Activated CD4-positive, alpha-beta T cell treated with anti-CD3 and anti-CD28 coated beads, Interleukin-2, amount 10 ng/mL, durations not matched to agents 7 days and 5 days (primary cell): ENCODE measurements at regions of chr11 and their contacts with region 1.

Region 1: GRCh38 chr11:113971506-113972195 is 3.3 kb upstream of the HTR3A start:
- DNase-seq: no peak
- H3K4me3 Mint-ChIP-seq: no peak overlapping the region
- H3K27ac Mint-ChIP-seq: no peak overlapping the region
- H3K4me1 Mint-ChIP-seq: no peaks in the 10 kb centered on the region
- H3K27me3 Mint-ChIP-seq: peaks cover 2% of the 10 kb centered on the region

Region 2: DNA sequence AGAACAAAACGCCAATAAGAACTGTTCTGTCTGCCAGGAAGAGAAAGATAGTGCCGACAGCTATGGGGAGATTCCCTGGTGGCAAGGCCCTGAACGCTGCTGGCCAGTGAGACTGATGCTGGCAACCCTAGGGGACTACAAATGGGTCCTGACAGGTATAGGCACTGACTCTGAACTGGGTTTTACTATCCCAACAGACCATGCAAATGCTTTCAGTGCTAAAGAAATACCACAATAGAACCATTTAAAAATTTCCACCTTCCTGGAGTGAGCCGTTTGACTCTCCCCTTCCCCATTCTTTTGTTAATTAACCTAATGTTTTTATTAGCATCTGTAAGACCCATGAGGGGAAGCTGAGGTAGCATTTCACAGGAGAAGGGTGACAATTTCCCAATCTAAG is 121.9 kb before region 1 on chr11:
- CTCF ChIA-PET with region 1: no interaction called
- POLR2A ChIA-PET with region 1: no interaction called
- DNase-seq: no peak
- H3K4me3 Mint-ChIP-seq: no peak overlapping the region
- H3K27ac Mint-ChIP-seq: no peak overlapping the region
- H3K4me1 Mint-ChIP-seq: no peaks in the 10 kb centered on the region
- H3K27me3 Mint-ChIP-seq: no peaks in the 10 kb centered on the region

Region 3: DNA sequence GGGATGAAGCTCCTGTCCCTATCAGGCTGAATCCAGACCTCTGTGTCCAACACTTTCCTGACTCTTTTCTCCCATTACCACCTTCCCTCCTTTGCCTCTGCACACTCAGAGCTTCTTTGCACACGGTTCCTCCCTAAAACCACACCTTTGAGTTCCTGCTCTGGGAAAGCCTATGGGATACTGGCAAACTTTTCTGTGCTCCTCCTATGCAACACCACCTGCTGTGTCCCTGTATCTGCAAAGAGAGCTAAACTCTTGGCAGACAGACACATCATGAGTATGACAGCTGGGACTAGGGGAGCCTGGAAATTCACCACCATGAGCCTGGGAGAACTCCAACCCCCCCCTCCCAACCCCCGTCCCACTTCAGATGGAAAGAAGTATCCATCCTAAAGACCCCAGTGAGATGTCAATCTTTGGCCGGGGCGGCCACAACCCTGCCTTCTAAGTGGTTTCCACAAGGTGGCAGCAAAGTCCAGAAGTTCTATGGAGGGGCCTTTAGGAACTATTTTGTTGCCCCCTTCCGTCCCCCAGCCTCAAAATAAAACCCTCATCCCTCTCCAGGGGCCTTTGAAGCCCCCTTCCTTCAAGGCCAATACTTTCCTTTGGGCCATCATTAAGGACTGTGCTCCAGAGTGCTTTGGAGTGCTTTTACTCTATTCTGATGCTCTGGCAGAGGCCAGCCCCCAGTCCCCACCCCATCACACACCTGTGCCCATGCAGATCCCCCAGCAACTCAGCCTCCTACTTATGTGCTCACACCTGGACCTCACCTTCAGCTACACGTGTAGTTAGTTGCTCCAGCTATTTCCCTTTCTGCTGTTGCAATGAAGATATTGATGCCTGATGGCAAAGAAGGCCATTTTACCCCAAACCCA is 22.7 kb after region 1 on chr11:
- CTCF ChIA-PET with region 1: interaction called, 10 read pairs
- POLR2A ChIA-PET with region 1: interaction called, 4 read pairs
- DNase-seq: peak; percentile 47
- H3K4me3 Mint-ChIP-seq: no peak overlapping the region
- H3K27ac Mint-ChIP-seq: no peak overlapping the region
- H3K4me1 Mint-ChIP-seq: peaks cover 8% of the 10 kb centered on the region
- H3K27me3 Mint-ChIP-seq: peaks cover 10% of the 10 kb centered on the region

Region 4: DNA sequence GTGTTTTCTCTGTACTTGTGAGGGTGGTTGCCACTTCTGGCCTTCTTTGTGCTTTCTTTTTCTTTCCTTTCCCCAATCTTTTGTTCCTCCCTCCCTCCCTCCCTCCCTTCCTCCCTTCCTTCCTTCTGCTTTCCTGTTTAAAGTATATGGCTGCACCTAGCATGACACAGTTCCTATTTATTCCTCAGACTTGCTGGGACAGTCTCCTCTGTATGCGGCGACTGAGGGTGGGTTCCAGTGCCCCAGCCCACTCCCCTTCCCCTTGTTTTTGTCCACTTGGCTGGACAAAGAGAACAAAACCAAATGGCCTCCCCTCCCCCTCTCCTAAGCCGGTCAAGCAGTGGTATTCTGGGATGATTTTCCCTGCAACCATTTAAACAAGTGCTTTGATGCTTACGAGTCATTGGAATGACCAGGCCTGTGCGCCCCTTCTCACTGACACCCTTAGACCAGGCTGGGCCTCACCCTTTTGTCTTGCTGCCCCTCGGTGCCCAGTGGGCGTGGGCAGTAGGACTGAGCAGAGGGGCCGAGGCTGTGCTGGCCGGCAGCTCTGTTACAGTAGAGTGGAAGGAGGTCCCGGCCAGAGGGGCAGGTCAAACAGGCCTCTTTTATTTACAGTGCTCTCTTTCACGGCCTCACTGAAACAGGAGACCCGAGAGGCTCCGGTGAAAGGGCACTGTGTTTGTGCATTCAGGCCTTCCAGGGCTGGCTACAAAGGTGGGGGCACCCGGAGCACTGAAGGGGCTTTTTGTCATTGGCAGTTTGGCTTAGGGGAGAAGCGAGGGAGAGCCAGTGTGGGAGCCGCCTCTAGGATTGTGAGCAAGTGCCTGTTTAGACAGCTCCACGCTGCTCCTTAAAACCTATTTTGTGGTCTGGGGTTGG is 120.1 kb after region 1 on chr11:
- CTCF ChIA-PET with region 1: no interaction called
- POLR2A ChIA-PET with region 1: no interaction called
- DNase-seq: no peak
- H3K4me3 Mint-ChIP-seq: no peak overlapping the region
- H3K27ac Mint-ChIP-seq: no peak overlapping the region
- H3K4me1 Mint-ChIP-seq: peaks cover 10% of the 10 kb centered on the region
- H3K27me3 Mint-ChIP-seq: peaks cover 3% of the 10 kb centered on the region

Region 5: DNA sequence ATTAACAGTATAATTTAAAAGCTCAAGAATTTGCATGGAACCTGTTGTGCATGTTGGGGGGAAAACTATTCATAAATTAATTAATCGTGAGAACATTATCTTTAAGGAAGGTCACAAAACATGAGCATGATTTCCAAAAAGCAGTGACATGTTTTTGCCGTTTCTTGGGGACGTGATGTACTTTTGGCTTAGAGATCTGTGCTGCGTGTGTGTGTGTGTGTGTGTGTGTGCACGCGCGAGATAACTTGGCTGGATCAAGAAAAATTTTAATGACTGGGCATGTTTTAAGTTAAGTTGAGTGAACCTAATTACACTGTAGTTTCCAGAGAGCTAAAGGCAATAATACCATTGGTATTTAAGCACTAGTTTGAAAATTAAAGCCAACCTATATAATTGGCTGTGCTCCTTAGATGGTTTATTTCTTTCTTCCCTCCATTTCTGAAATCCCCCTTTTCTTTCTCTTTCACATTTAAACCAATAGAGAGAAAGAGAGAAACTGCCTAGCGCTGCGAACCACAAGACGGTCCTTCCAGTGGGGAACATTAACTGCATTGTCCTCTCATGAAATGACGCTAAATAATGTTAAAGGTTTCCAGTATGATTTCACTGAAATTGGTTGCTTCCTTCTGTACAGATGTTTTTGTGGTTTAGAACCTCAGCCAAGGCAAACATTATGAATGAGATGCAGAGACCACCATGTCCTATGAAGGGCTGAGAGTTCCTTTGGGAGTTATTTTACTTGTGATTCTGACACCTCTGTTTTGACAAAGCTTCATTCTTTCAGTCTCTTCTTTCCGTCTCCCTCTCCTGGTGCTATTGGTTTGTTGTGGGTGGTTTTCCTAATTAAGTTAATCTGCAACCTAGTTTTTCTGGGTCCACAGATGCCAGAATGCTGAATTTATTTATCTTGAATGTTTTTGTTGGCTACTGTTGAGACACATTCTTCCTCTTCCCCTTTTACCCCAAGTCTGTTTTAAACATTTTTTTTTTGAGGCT is 139.6 kb after region 1 on chr11:
- CTCF ChIA-PET with region 1: no interaction called
- POLR2A ChIA-PET with region 1: no interaction called
- DNase-seq: no peak
- H3K4me3 Mint-ChIP-seq: no peak overlapping the region
- H3K27ac Mint-ChIP-seq: no peak overlapping the region
- H3K4me1 Mint-ChIP-seq: peaks cover 21% of the 10 kb centered on the region
- H3K27me3 Mint-ChIP-seq: peaks cover 70% of the 10 kb centered on the region